Activated CD8-positive, alpha-beta T cell treated with anti-CD3 and anti-CD28 coated beads for 36 hours (primary cell): ENCODE measurements at regions of chr5 and their contacts with region 1.

Region 1: GRCh38 chr5:80255732-80256479 is at the start of gene SERINC5:
- DNase-seq: peak; percentile 88
- ATAC-seq: peak; percentile 80
- H3K4me3 Mint-ChIP-seq: peak within 1 kb of the TSS; percentile 97
- H3K27ac Mint-ChIP-seq: peak within 1 kb of the TSS; percentile 99
- H3K4me1 Mint-ChIP-seq: peaks cover 38% of the 10 kb centered on the region
- H3K27me3 Mint-ChIP-seq: no peaks in the 10 kb centered on the region
- CTCF ChIP-seq: no peak
- total RNA-seq, gene SERINC5: 32.4 to 33.1 TPM

Region 2: DNA sequence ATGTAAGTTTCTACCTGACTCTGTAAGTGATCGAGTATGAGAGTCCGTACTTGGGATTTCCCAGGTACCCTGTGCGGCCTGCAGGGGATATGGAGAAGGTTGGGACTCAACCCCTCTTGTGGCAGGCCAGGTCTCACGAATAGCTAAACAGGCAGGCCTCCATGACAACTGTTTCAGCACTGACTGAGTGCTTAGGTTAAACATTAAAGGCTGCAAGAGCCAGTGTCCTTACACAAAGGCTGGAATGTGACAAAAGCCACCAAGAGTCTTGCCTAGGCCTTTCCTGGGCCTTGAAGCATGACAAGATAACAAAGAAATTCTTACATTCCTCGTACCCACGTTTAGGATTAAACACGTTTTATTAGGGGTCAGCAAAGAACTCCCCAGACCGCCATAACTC is 162.1 kb before region 1 on chr5:
- CTCF ChIA-PET with region 1: interaction called, 5 read pairs
- POLR2A ChIA-PET with region 1: interaction called, 11 read pairs
- intact Hi-C with region 1: no loop called
- DNase-seq: no peak
- ATAC-seq: no peak
- H3K4me3 Mint-ChIP-seq: no peak overlapping the region
- H3K27ac Mint-ChIP-seq: peak overlapping the region; percentile 27
- H3K4me1 Mint-ChIP-seq: peaks cover 17% of the 10 kb centered on the region
- H3K27me3 Mint-ChIP-seq: no peaks in the 10 kb centered on the region
- CTCF ChIP-seq: no peak

Region 3: DNA sequence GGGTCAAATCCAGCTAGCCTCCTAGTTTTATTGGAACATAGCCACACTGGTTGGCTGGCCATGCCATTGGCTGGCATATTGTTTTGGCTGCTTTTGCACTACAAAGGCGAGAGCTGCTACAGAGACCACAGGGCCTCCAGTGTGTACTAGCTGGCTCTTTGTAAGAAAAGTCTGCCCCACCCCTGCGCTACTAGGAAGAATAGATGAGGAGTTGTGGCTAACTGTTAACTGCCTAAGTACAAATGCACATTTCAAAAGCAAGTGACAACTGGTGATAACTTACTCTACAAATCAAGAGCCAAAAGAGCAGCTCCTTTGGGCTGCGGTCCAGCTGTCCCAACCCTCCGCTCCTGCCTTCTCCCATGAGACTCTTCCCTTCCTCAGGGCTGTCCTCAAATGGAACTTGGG is 63.9 kb before region 1 on chr5:
- CTCF ChIA-PET with region 1: interaction called, 6 read pairs
- POLR2A ChIA-PET with region 1: interaction called, 40 read pairs
- intact Hi-C with region 1: loop called (anchors 5 kb)
- DNase-seq: peak; percentile 73
- ATAC-seq: peak; percentile 70
- H3K4me3 Mint-ChIP-seq: peak overlapping the region; percentile 66
- H3K27ac Mint-ChIP-seq: peak overlapping the region; percentile 86
- H3K4me1 Mint-ChIP-seq: peaks cover 77% of the 10 kb centered on the region
- H3K27me3 Mint-ChIP-seq: no peaks in the 10 kb centered on the region
- CTCF ChIP-seq: no peak

Region 4: DNA sequence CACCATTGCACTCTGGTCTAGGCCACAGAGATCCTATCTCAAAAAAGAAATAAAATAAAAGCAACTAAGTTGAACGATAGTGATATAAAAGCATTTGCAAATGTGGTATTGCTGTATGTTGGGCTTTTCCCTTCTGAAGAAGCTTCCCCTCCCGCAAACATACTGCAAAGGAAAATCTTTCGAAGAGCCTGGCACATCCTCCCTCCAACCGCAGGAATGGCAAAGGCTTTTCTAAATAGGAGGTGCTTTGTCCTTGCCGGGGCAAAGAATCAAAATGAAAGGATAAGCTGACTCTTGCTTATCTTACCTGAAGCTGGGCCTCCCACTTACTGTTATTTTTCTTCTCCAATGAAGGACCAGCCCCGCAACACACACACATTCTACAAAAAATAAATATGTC is 45.9 kb before region 1 on chr5:
- CTCF ChIA-PET with region 1: interaction called, 7 read pairs
- POLR2A ChIA-PET with region 1: interaction called, 50 read pairs
- intact Hi-C with region 1: loop called (anchors 5 kb)
- DNase-seq: no peak
- ATAC-seq: no peak
- H3K4me3 Mint-ChIP-seq: peak overlapping the region; percentile 55
- H3K27ac Mint-ChIP-seq: peak overlapping the region; percentile 82
- H3K4me1 Mint-ChIP-seq: peaks cover 91% of the 10 kb centered on the region
- H3K27me3 Mint-ChIP-seq: no peaks in the 10 kb centered on the region
- CTCF ChIP-seq: no peak

Region 5: DNA sequence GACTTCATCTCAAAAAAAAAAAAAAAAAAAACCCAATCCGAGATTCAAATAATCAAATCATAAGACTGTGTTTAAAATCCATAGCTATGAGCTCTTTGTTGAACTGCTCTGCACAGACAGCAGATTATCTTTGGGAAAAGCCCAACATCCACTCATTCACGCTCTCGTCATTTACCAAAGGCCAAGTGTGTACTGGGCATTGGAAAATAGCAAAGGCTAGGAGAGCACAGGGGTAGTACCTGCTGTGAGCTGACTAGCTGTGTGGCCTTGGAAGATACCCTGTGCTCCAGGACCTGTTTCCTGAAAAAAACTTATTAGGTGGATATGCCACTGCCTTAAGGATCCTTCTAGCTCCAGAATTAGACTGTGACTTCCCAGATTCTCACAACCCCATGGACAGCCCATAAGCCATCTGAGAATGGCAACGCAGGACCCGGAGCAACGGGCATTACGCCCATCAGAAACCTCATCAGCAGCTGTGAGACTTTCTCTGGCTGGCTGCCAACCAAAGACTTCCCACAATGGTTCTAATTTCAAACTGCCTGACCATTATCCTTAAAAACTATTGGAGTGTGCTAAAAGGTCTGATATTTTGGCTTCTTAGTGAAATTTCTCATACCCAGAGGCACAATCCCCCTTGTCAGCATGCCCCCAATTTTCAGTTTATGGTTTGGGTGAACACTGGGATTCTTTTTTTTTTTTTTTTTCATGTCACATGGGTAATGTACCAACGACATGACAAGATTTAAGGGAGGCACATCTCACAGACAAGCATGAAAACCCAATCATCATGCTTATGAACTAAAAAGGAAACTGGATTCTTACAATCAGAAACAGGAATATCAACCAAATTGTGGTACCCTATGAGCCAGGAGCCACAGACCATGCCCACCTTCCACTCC is 16.9 kb before region 1 on chr5:
- CTCF ChIA-PET with region 1: interaction called, 7 read pairs
- POLR2A ChIA-PET with region 1: interaction called, 17 read pairs
- intact Hi-C with region 1: no loop called
- DNase-seq: no peak
- ATAC-seq: peak; percentile 34
- H3K4me3 Mint-ChIP-seq: peak overlapping the region; percentile 26
- H3K27ac Mint-ChIP-seq: peak overlapping the region; percentile 86
- H3K4me1 Mint-ChIP-seq: peaks cover 66% of the 10 kb centered on the region
- H3K27me3 Mint-ChIP-seq: no peaks in the 10 kb centered on the region
- CTCF ChIP-seq: no peak

Region 6: DNA sequence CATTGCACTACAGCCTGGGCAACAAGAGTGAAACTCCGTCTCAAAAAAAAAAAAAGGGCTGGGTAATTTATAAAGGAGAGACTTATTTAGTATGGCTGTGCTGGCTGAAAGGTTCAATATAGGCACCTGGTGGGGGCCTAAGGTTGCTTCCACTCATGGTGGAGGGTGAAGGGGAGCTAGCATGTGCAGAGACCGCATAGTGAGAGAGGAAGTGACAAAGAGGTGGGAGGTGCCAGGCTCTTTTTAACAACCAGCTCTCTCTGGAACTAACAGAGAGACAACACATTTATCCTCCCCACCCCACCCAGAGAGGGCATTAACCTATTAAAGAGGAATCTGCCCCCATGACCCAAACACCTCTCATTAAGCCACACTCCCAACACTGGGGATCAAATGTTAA is 28.8 kb after region 1 on chr5:
- CTCF ChIA-PET with region 1: no interaction called
- POLR2A ChIA-PET with region 1: interaction called, 22 read pairs
- intact Hi-C with region 1: no loop called
- DNase-seq: peak; percentile 70
- ATAC-seq: peak; percentile 92
- H3K4me3 Mint-ChIP-seq: no peak overlapping the region
- H3K27ac Mint-ChIP-seq: peak overlapping the region; percentile 90
- H3K4me1 Mint-ChIP-seq: peaks cover 21% of the 10 kb centered on the region
- H3K27me3 Mint-ChIP-seq: no peaks in the 10 kb centered on the region
- CTCF ChIP-seq: no peak

Region 7: DNA sequence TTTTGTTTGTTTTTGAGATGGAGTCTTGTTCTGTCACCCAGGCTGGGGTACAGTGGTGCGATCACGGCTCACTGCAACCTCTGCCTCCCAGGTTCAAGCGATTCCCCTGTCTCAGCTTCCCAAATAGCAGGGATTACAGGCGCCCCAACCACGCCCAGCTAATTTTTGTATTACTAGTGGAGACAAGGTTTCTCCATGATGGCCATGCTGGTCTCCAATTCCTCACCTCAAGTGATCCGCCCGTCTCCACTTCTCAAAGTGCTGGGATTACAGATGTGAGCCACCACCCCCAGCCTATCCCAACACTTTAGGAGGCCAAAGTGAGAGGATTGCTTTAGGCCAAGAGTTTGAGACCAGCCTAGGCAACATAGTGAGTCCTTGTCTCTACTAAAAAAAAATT is 83.2 kb after region 1 on chr5:
- CTCF ChIA-PET with region 1: no interaction called
- POLR2A ChIA-PET with region 1: no interaction called
- intact Hi-C with region 1: no loop called
- DNase-seq: no peak
- ATAC-seq: no peak
- H3K4me3 Mint-ChIP-seq: no peak overlapping the region
- H3K27ac Mint-ChIP-seq: no peak overlapping the region
- H3K4me1 Mint-ChIP-seq: no peaks in the 10 kb centered on the region
- H3K27me3 Mint-ChIP-seq: peaks cover 6% of the 10 kb centered on the region
- CTCF ChIP-seq: no peak